ENCODE measurements at regions of chr1 and their contacts with region 1.

Region 1: DNA sequence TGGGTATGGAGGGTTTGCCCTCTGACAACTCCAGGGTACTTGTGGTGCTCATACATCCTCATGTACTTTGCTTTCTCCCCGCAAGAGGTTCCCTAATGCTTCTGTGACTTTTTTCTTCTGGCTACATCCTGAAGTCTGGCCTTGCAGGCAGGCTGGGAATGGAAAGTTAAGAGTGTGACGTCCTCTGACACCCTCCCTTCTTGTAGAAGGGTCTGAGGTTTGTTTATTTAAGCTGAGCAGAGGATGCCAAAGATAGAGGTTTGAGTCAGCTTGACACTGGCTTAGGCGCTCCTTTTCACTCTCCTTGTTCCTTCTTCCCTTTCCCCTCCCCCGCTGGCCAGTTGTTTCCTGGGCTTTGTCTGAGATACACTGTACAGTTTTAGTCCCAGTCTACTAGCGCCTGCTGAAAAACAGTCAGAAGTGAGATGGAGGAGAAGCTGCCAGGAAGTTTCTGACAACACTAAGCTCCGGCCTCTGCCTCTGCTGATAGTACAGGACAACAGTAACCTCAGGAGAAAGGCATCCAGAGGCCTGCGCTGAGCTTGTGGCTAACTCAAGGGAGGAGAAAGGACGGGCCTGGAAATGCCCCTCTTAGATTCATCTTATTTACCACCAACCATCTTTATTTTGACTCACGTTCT is at the start of gene MACF1:
- DNase-seq: peak; percentile 81
- H3K4me3 ChIP-seq: peak within 1 kb of the TSS; percentile 70
- CTCF ChIP-seq: peak; percentile 41

Region 2: DNA sequence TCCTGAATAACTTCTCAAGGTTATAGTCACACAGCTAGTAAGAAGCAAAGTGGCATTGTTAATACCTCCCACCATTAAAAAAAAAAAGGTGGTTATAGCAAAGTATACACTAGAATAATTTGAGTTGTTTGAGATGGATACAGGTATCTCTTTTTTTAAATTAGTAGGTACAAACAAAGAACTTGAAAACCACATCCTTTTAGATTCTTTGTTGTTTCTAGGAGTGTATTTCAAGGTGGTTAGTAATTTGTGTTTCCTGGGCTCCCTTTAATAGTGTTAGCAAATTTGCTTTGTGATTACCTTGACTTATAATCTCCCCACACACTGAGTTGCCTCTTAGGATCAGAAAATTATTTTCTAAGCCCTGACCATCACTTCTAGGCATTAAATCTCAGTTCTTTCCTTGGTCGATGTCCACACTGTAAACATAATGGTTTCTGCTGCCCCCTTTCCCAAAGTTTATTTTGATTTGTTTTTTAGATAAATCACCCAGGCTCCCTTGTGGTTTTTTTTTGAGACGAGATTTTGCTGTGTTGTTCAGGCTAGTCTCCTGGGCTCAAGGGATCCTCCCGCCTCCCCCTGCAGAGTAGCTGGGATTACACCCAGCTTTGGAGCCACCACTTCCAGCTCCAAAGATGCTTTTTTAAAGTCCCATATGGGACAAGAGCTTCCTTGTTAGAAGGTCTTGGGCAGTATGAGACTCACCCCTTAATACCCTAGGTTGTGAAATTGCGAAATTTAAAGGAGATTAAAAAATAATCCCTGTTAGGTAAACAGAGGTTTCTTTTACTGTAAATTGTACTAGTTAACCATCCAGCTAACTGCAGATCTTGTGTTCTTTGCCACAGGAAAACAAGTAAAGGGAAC is 207.3 kb before region 1 on chr1:
- CTCF ChIA-PET with region 1: no interaction called
- POLR2A ChIA-PET with region 1: no interaction called
- DNase-seq: no peak
- H3K4me3 ChIP-seq: no peak overlapping the region
- CTCF ChIP-seq: no peak

Region 3: DNA sequence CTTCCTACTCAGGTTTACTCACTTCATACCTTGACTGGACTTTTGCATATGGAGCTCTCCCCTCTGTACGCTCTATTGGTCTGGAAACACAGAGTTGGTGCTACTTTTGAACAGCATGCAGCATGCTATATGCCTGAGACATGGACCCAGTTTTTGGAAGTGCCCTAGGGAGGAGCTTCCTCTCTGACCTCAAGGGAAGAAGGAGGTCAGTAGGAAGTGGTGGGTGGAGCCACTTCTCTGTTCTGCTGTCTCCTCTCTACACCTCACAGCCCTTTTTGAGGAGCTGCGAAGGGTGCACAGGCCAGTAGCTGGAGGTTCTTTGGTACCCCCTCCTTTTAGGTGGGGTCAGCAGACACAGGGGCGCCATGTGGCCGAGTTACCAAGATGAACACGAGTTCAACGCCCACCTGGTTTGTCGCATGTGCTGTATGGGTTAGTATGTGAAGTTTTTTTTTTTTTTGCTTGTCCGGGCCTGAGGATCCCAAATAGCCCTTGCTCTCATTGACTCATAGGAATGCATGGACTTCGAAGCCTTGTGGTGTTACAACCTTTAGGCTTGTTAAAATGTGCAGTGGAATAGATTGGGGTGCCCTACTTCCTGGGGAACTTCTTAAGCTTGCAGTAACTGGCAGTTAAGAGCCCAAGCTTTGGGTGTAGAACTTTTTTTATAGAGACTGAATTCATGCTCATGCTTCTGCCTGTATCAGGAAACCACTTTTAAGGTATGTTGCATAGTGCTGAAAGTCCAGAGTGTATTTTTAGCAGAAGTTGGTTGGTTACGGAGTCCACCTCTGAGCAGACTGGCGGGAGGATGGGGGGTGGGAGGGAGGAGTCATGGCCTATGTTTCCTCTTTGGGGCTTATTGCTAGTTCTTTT is 10.7 kb after region 1 on chr1:
- CTCF ChIA-PET with region 1: interaction called, 23 read pairs
- POLR2A ChIA-PET with region 1: interaction called, 20 read pairs
- DNase-seq: no peak
- H3K4me3 ChIP-seq: no peak overlapping the region
- CTCF ChIP-seq: no peak

Region 4: GRCh38 chr1:39220891-39221870 is 16.6 kb after region 1 on chr1:
- CTCF ChIA-PET with region 1: interaction called, 10 read pairs
- POLR2A ChIA-PET with region 1: interaction called, 4 read pairs
- DNase-seq: no peak
- H3K4me3 ChIP-seq: no peak overlapping the region
- CTCF ChIP-seq: no peak